OCI-LY7 (cell line): ENCODE measurements at regions of chr3 and their contacts with region 1.

Region 1: GRCh38 chr3:186821429-186822367 is 15.4 kb upstream of the RFC4 start:
- DNase-seq: peak; percentile 75
- H3K4me3 ChIP-seq: no peak overlapping the region
- H3K27ac ChIP-seq: no peak overlapping the region
- H3K4me1 ChIP-seq: peaks cover 14% of the 10 kb centered on the region
- CTCF ChIP-seq: peak; percentile 91

Region 2: DNA sequence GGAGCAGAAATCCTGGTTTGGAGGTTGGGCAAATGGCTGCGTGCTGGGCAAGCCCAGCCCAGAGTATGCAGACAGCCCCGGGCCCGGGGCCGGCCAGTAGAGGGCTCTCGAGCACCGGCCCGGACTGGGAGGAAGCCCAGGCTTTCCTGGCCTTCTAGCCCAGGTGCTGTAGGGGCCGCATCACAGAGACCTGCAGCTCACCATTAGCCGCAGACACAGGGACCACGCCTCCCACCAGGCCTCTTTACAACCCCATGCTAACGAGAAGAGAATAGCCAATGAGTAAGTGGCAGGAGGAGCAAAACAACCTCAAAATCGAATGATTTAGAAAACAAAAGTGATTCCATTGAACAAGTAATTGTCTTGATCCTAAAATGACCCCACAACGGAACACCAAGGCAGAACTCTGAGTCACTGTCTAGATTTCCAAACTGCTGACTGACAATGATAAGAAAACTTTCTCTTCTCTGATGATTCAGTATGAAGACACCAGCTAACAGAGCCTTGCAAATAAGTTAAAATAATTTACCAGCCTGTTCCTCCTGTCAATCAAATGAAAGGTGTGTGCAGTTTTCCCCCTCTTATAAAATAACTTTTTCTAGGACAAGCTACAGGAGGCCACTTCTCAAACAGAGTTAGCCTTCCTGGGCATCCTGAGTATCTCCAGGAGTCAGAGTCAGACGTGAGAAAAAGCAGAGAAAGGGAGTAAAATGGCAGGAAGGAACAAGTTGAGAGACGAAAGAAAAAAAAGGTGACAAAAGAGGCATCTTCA is 561.9 kb before region 1 on chr3:
- CTCF ChIA-PET with region 1: no interaction called
- POLR2A ChIA-PET with region 1: no interaction called
- intact Hi-C with region 1: loop called (anchors 5 kb)
- DNase-seq: peak; percentile 84
- H3K4me3 ChIP-seq: no peak overlapping the region
- H3K27ac ChIP-seq: no peak overlapping the region
- H3K4me1 ChIP-seq: peaks cover 26% of the 10 kb centered on the region
- CTCF ChIP-seq: peak; percentile 97

Region 3: DNA sequence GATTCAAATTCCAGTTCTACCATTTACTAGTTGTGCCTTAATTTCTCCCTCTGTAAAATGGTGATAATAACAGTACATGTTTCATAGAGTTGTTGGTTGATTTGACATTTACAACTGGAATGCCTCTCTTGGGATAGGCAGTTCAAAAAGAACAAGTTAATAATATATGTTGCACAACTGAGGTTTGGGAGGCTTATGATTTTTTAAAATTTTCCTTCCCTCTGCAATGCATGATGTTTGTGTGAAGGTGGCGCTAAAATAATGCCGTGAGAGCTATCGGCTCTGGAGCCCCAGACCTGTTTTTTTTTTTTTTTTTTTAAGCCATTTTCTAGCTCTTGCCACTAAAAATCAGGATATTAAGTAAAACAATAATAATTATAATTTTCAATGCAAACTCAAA is 232.6 kb before region 1 on chr3:
- CTCF ChIA-PET with region 1: no interaction called
- POLR2A ChIA-PET with region 1: interaction called, 3 read pairs
- intact Hi-C with region 1: loop called (anchors 1 kb)
- DNase-seq: peak; percentile 49
- H3K4me3 ChIP-seq: no peak overlapping the region
- H3K27ac ChIP-seq: no peak overlapping the region
- H3K4me1 ChIP-seq: no peaks in the 10 kb centered on the region
- CTCF ChIP-seq: peak; percentile 82

Region 4: GRCh38 chr3:186617038-186617946 is 204.4 kb before region 1 on chr3:
- CTCF ChIA-PET with region 1: interaction called, 5 read pairs
- POLR2A ChIA-PET with region 1: no interaction called
- intact Hi-C with region 1: loop called (anchors 1 kb)
- DNase-seq: peak; percentile 77
- H3K4me3 ChIP-seq: peak overlapping the region; percentile 12
- H3K27ac ChIP-seq: no peak overlapping the region
- H3K4me1 ChIP-seq: peaks cover 18% of the 10 kb centered on the region
- CTCF ChIP-seq: peak; percentile 92

Region 5: DNA sequence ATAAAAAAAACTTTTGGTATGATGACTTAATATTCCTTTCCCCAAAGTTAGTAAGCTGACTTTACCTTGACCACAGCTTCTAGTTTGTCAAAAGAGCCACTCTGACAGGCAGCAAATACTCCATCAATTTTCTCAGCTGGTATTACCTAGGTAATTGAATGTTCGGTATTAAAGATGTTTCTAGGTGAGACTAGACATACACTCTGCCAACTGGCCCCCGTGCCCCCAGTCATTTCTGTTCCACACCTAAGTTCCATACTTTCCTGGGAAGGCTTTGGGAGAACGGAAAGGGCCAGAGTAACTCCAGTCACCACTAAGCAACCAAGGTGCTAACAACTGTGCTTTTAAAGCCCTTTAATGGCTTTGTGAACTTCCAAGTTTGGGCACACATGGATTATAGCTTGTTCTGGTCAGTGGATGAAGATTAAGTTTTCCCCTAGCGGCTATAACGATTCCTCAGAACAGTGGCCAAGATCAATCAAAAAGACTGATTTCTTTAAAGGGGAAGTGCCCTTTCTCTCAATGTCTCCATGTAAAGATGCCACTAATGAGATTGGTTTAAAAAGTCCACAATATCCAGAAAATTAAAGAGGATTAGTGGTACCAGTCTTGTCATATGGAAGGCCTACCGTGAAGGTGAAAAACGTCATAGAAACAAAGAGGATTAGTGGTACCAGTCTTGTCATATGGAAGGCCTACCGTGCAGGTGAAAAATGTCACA is 31.3 kb before region 1 on chr3:
- CTCF ChIA-PET with region 1: no interaction called
- POLR2A ChIA-PET with region 1: no interaction called
- intact Hi-C with region 1: no loop called
- DNase-seq: peak; percentile 50
- H3K4me3 ChIP-seq: no peak overlapping the region
- H3K27ac ChIP-seq: peak overlapping the region; percentile 34
- H3K4me1 ChIP-seq: peaks cover 38% of the 10 kb centered on the region
- CTCF ChIP-seq: peak; percentile 31; the same call in 1 of the 2 replicates

Region 6: DNA sequence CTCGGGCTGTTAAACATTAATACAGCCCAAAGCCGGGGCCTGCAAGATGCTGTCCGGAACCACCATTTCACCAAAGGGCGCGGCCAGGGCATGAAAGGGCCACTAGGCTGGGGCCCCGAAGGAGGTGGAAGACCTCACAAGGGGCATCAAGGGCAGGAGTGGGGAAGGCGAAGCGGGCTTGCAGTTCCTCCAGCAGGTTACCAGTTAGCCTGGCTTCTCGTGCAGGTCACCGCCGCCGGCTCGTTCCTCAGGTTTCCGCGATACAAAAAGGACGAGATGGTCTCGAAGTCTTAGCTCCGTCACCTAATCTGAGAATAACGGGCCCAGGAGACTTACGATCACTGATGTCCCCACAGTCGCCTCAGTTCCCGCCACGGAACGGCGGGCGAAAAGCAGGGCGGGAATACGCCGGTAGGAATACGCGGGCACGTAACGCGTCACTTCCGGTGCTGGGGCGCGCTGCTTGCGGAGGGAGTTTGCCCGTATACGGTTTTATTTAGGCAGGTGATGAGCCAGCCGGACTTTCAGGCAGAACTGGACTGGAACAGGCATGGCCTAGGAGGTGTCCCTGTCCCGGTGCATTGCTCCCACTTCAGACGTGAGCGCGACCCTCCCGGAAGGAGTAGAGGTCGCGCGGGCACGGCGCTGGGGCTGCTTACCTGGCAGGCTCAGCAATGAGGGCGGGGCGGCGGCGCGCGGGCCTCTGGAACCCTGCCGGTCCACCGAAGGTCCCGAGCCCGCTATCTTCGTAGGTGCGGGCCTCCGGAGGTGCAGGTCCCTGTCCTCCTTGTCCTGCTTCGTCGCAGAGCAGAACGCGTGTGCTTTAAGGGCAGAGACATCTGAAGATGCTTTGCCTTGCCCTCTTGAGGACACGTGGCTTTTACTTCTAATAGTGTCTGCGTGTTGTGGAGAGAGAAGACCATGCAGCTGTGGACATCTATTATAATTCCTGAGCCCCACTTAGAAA is 15.3 kb before region 1 on chr3 and contains the start of gene RFC4:
- CTCF ChIA-PET with region 1: no interaction called
- POLR2A ChIA-PET with region 1: interaction called, 12 read pairs
- intact Hi-C with region 1: no loop called
- DNase-seq: peak; percentile 90
- H3K4me3 ChIP-seq: peak within 1 kb of the TSS; percentile 86
- H3K27ac ChIP-seq: peak within 1 kb of the TSS; percentile 78
- H3K4me1 ChIP-seq: peaks cover 20% of the 10 kb centered on the region
- CTCF ChIP-seq: no peak
- total RNA-seq, gene RFC4: 114 and 137 TPM in 2 replicates